Posterior cingulate gyrus (tissue), 11 donors: ENCODE measurements at regions of chr16 and their contacts with region 1.

Region 1: GRCh38 chr16:65117811-65118448 is 3.9 kb downstream of the CDH11 start:
- DNase-seq: peak; percentile 69 to 97 (median 83)

Region 2: DNA sequence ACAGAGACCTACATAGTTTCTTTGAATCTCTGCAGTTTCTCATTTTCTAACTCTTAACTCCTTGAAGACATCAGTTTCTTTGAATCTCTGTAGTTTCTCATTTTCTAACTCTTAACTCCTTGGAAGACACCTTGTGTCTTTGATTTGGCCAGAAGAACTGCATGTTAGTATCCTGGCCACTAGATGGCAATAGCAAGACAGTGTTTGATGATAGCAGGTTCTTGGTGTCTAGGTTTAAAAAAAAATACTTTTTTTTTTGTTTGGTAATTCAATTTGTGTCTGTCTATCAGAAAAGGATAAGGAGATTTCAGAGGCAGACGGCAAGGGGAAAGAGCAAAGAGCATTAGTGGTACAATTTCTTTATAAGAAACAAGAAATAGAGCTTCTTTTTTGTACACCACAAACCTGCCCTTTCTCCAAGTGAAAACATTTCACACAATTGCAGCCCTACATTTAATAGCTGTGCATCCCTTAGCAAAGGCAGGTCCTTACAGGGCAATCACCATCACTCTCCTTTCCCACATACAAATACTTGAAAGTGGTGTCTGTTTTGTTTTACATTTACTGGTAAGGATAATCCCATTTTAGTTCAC is 1756.8 kb before region 1 on chr16:
- intact Hi-C with region 1: loop called (anchors 5 kb)
- DNase-seq: no peak

Region 3: GRCh38 chr16:63461248-63461841 is 1656.6 kb before region 1 on chr16:
- intact Hi-C with region 1: loop called (anchors 5 kb)
- DNase-seq: peak in 3 of 10 donors; percentile 14 to 17 (median 16)

Region 4: GRCh38 chr16:64089697-64090096 is 1028.2 kb before region 1 on chr16:
- intact Hi-C with region 1: loop called (anchors 2 kb)
- DNase-seq: peak in 1 of 10 donors; percentile 8

Region 5: GRCh38 chr16:65070831-65071432 is 47.0 kb before region 1 on chr16:
- intact Hi-C with region 1: loop called (anchors 5 kb)
- DNase-seq: peak; percentile 51 to 97 (median 77)

Region 6: DNA sequence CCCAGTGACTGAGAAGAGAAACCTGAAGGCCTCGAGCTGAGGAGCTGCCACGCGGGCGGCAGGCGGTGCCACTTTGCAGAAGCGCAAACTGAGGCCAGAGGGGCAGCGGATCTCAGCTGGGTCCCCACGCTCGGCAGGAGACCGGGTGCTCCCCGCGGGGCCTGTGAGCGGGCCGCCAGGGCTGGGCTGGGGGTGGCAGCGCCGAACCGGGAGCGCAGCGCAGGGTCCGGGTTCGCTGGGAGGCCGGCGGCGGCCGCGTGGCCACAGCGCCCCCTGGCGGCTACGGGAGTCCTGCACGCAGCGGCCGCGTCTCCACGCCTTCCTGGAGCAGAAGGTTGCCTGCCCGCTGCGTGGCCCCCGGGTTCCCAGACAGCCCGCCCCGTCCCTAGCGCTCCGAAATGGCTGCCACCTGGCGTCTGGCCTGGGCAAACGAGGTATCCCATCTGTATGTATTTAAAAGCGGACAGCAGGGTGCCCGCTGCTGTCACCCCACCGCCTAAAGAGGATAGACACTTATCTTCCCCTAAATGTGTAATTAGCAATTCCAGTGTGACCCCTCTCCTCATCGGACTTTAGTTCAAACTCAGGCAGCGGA is 1152.5 kb after region 1 on chr16:
- intact Hi-C with region 1: loop called (anchors 5 kb)
- DNase-seq: peak; percentile 55 to 96 (median 72)